ENCODE measurements at regions of chr11 and their contacts with region 1.

Region 1: DNA sequence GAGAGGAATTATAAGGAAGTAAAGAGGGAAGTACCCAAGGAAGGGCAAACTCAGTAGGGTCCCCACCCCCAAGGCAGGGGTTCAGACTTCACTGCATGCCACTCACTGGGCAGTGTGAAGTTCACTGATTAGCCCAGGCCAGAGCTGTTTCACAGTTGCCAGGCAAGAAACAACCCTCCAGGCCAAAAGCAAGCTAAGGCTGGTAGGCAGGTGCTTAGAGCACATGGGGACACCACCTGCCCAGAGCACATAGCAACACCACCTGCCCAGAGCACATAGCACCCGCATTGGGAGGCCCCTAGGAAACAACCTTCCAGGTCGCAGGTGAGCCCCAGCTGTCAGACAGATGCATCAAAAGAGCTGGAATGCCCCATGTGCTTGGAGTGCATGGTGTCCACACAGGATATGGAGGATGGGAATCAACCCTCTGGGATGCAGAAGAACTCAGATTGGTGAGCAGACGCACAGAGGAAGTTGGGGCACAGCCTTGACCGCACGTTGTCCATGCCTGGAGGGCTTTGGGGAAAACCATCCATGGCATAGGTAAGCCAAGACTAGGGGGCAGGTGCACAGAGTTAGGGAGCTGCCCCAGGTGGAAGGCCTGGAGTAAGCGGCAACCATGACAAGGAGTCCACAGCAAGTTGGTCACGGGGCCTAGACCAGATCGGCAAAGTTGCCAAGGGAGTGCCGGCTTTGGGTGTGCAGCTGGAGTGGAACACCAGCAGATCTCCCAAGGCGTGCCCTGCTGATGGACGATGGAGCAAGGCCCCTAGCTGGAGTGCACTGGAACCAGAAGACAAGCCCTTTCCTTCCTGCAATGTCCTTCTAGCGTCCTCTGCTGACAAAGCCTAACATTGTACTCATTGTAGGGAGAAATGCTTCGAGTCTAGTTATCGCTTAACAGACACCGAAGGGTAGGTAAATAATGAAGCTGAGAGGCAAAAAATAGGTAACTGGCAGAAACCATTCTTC is 7.8 kb upstream of the TMEM216 start:
- DNase-seq: no peak
- ATAC-seq: peak in 1 of 2 donors; percentile 13

Region 2: GRCh38 chr11:61141601-61142028 is 242.9 kb before region 1 on chr11:
- intact Hi-C with region 1: no loop called
- DNase-seq: no peak
- ATAC-seq: no peak

Region 3: DNA sequence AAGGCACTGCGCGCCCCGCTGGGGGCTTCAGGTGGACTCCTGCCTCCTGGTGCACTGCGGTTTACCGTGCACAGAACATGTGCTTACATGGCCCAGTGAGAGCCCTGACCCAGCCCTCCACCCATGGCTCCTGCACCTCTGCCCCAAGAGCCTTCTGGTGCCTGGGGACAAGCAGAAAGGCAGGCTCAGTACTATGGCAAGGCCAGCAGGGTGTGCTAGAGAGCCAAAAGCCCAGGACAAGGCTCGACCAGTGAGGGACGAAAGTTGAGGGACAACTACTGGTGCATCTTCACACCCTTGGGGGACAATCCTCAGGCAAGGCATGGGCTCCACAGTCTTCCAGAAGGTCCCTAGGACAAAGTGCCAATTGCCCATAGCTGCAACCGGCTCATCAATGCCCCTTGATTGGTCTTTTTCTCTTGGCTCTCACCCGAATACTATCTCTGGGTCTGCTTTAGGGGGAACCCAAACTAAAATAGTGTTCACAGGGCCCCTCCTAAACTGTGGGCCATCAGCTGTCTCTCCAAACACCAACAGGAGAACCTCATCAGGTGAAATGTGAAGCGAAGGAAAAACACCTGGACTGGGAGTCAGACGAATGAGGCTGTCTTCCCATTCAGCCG is 130.0 kb before region 1 on chr11:
- intact Hi-C with region 1: loop called in 1 of 2 experiments (anchors 5 kb)
- DNase-seq: peak; percentile 51
- ATAC-seq: peak; percentile 64 to 73

Region 4: DNA sequence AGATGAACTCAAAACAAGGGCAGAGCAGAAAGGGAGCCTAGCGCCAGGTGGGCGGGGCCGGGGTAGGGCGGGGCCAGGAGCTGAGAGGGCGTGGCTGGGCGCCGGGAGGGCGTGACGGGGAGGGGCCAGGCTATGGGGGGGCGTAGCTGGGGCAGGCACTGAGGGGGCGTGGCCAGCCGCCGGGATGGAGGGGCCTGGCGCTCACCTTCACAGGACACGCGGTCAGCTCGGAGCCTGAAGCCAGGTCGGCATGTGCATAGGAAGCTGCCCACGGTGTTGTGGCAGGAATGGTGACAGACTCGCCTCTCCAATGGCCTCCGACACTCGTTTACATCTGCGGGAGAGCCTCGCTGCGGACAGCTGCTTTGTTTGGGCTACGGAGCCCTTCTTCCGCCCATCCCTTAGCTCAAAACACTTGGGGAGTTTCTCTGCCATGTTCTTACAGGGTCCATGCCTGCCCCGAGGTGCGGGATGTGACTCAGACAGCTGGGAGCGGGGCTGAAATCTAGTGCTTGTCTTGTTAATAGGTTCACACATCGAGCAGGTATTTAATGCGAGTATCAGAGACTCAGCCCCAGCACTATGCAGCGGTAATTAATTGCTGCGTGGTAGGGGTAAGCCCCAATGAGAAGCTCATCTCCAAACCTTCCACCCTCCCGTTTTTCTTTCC is 102.8 kb before region 1 on chr11:
- intact Hi-C with region 1: no loop called
- DNase-seq: peak; percentile 57
- ATAC-seq: peak; percentile 78 to 94

Region 5: GRCh38 chr11:61336171-61336922 is 48.2 kb before region 1 on chr11:
- intact Hi-C with region 1: loop called (anchors 1 to 5 kb)
- DNase-seq: peak; percentile 83
- ATAC-seq: peak; percentile 53 to 58

Measured in left cardiac atrium (tissue), 4 donors.